ENCODE measurements at regions of chr7 and their contacts with region 1.

Region 1: GRCh38 chr7:24572997-24573625 is at the start of gene PALS2:
- DNase-seq: peak; percentile 77 to 83 (median 80)
- ATAC-seq: peak; percentile 88
- H3K4me3 ChIP-seq: peak within 1 kb of the TSS; percentile 45 to 70
- H3K27ac ChIP-seq: peak within 1 kb of the TSS; percentile 84 to 90 (median 88)
- H3K4me1 ChIP-seq: peaks cover 37% of the 10 kb centered on the region
- H3K27me3 ChIP-seq: no peaks in the 10 kb centered on the region
- CTCF ChIP-seq: peak in 1 of 7 experiments; percentile 3
- POLR2A ChIP-seq: peak; percentile 51 to 64 (median 64)
- total RNA-seq, gene PALS2: 11.7 to 17.1 TPM

Region 2: DNA sequence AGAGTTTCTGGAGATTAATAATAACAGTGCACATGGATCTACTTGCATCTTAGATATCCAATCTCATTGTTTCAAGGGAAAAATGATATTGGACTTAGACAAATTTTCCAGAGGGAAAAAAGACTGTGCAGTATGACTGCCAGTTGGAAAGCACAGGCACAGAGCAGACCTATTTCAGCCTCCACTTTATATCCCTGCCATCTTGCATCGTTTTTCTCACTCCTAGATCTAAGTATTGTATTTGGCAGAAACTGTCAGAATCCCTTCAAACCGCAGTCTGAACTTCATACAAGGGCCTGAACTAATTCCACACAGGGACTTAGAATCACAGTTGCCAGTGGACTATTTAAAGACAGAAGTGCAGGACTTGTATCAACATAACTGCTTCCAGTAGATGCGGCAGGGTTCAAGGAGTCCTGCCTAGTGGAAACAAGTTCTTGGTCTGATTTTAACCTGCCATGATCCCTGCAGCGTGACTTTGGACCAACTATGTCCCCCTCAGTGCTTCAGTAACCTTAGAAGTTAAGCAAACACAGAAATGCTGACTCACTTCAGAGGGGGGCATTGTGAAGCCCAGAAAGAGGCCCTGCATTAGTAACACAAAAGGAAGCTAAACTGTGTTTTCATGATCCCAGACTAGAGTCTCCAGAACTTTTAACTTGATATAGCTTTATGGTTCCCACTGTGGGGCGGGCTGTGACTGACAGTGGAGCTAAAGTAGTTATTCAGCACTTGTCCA is 95.5 kb before region 1 on chr7:
- intact Hi-C with region 1: no loop called
- DNase-seq: peak; percentile 13 to 48 (median 36)
- ATAC-seq: peak; percentile 79
- H3K4me3 ChIP-seq: no peak overlapping the region
- H3K27ac ChIP-seq: peak overlapping the region in 2 of 4 donors; percentile 37 to 42
- H3K4me1 ChIP-seq: peaks cover 36% of the 10 kb centered on the region
- H3K27me3 ChIP-seq: no peaks in the 10 kb centered on the region
- CTCF ChIP-seq: no peak
- POLR2A ChIP-seq: no peak

Region 3: GRCh38 chr7:24665564-24666294 is 92.6 kb after region 1 on chr7:
- intact Hi-C with region 1: loop called (anchors 10 kb)
- DNase-seq: peak; percentile 42 to 46 (median 45)
- ATAC-seq: peak; percentile 60
- H3K4me3 ChIP-seq: no peak overlapping the region
- H3K27ac ChIP-seq: no peak overlapping the region
- H3K4me1 ChIP-seq: no peaks in the 10 kb centered on the region
- H3K27me3 ChIP-seq: no peaks in the 10 kb centered on the region
- CTCF ChIP-seq: peak in 6 of 7 experiments; percentile 47 to 75 (median 70)
- POLR2A ChIP-seq: no peak

Region 4: GRCh38 chr7:24877790-24878311 is 304.7 kb after region 1 on chr7:
- intact Hi-C with region 1: no loop called
- DNase-seq: peak in 1 of 4 donors; percentile 22
- ATAC-seq: no peak
- H3K4me3 ChIP-seq: no peak overlapping the region
- H3K27ac ChIP-seq: no peak overlapping the region
- H3K4me1 ChIP-seq: peaks cover 7% of the 10 kb centered on the region
- H3K27me3 ChIP-seq: no peaks in the 10 kb centered on the region
- CTCF ChIP-seq: no peak
- POLR2A ChIP-seq: no peak